Right cardiac atrium (tissue), 5 donors: ENCODE measurements at regions of chr1 and their contacts with region 1.

Region 1: DNA sequence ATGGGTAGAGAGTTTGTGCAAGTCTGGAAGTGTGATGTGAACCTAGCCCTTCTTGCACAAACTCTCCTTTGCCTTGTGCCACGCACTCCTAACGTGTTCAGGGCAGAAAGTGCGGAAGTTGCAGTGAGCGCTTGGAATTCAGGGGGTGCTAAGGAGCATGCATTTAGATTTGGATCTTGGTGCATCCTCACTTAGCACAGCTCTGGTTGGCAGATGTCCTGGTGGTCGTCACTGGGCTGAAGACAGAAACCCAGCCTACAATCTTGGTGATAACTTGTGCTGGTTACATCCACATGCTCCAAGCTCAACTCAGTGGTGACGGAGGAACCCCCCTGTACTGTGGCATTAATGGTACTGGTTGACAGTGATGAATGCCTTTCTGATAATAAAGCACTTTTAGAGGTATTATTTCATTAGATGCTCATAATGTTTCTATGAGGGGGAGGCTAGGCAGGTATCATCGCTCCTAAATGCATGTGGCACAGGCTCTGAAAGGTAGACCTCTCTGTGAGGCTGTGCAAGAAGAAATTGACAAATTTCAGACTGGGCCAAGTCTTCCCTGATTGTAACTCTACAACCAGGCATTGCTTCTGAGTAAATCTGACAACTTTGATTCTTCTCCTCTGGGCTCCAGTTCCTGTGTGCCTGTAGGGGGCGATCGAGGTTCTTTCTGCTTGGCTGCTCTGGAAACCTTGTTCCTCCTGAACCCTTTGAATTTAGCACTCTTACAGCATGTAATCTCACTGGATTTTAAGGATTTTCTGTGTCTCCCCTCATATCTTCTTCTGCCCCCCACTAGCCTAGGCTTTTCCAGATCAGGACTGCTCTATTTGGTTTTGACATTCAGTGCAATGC is 40.6 kb downstream of the MAPKAPK2 start:
- DNase-seq: peak in 1 of 3 donors; percentile 52
- ATAC-seq: no peak
- H3K4me3 ChIP-seq: no peak overlapping the region
- H3K27ac ChIP-seq: peak overlapping the region; percentile 48
- H3K4me1 ChIP-seq: peaks cover 35% of the 10 kb centered on the region
- H3K27me3 ChIP-seq: no peaks in the 10 kb centered on the region

Region 2: GRCh38 chr1:206658264-206658980 is 66.9 kb before region 1 on chr1:
- intact Hi-C with region 1: loop called in 2 of 4 experiments (anchors 10 kb)
- DNase-seq: peak in 2 of 3 donors; percentile 61 to 78
- ATAC-seq: peak; percentile 45 to 51
- H3K4me3 ChIP-seq: no peak overlapping the region
- H3K27ac ChIP-seq: peak overlapping the region; percentile 81
- H3K4me1 ChIP-seq: peaks cover 32% of the 10 kb centered on the region
- H3K27me3 ChIP-seq: no peaks in the 10 kb centered on the region

Region 3: DNA sequence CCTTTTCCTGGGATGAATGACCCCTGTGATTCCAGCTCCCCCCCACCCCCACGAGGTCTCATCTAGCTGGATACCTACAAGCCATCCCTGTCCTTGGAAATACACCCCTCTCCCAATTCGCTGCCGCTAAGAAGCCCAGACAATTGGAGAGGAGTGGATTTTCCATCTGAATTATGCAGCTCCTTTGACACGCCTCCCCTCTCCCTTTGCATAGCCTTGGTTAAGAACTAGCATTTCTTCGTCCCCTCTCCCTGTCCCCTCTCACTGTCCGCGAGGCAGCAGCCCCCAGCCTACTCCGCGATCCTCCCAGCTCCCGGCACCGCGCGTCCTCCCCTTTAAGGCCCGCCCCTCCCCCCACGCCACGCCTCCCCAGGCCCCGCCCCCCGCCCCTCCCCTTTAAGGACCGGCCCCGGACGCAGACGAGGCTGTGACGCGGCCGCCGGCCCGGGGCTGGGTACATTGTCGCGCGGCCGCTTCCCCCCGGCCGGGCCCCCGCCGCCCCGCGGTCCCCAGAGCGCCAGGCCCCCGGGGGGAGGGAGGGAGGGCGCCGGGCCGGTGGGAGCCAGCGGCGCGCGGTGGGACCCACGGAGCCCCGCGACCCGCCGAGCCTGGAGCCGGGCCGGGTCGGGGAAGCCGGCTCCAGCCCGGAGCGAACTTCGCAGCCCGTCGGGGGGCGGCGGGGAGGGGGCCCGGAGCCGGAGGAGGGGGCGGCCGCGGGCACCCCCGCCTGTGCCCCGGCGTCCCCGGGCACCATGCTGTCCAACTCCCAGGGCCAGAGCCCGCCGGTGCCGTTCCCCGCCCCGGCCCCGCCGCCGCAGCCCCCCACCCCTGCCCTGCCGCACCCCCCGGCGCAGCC is 40.6 kb before region 1 on chr1 and contains the start of gene MAPKAPK2:
- intact Hi-C with region 1: loop called in 2 of 4 experiments (anchors 5 kb)
- DNase-seq: peak; percentile 83 to 93 (median 92)
- ATAC-seq: peak; percentile 80 to 88
- H3K4me3 ChIP-seq: peak within 1 kb of the TSS; percentile 96
- H3K27ac ChIP-seq: peak within 1 kb of the TSS; percentile 97
- H3K4me1 ChIP-seq: peaks cover 8% of the 10 kb centered on the region
- H3K27me3 ChIP-seq: no peaks in the 10 kb centered on the region
- total RNA-seq, gene MAPKAPK2: 192 to 221 (median 216) TPM